Activated CD4-positive, alpha-beta T cell treated with anti-CD3 and anti-CD28 coated beads for 36 hours (primary cell): ENCODE measurements at regions of chr17 and their contacts with region 1.

Region 1: DNA sequence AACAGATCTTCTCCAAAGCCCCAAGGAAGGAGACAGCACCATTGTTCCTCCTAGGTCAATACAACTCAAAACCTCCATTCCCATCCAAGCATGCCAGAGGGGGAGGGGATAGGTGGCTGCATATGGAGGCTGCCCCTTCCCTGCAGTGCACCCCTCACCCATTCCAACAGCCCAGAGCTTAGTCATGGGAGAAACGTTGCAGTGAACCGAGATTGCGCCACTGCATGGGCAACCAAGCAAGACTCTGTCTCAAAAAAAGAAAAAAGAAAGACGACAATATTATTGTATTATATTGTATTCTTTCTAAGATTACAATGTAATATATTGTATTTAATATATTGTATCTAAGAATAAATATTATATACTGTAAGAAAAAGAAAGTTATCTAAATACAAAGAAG is 36.4 kb upstream of the CD300E start:
- DNase-seq: no peak
- ATAC-seq: no peak
- H3K4me3 Mint-ChIP-seq: no peak overlapping the region
- H3K27ac Mint-ChIP-seq: no peak overlapping the region
- H3K4me1 Mint-ChIP-seq: peaks cover 5% of the 10 kb centered on the region
- H3K27me3 Mint-ChIP-seq: peaks cover 16% of the 10 kb centered on the region

Region 2: GRCh38 chr17:74089869-74090464 is 569.9 kb before region 1 on chr17:
- CTCF ChIA-PET with region 1: no interaction called
- POLR2A ChIA-PET with region 1: no interaction called
- intact Hi-C with region 1: no loop called
- DNase-seq: peak; percentile 87
- ATAC-seq: peak; percentile 60
- H3K4me3 Mint-ChIP-seq: no peak overlapping the region
- H3K27ac Mint-ChIP-seq: no peak overlapping the region
- H3K4me1 Mint-ChIP-seq: no peaks in the 10 kb centered on the region
- H3K27me3 Mint-ChIP-seq: peaks cover 13% of the 10 kb centered on the region

Region 3: GRCh38 chr17:74478420-74479100 is 181.3 kb before region 1 on chr17:
- CTCF ChIA-PET with region 1: no interaction called
- POLR2A ChIA-PET with region 1: no interaction called
- intact Hi-C with region 1: no loop called
- DNase-seq: peak; percentile 64
- ATAC-seq: peak; percentile 90
- H3K4me3 Mint-ChIP-seq: peak overlapping the region; percentile 22
- H3K27ac Mint-ChIP-seq: peak overlapping the region; percentile 65
- H3K4me1 Mint-ChIP-seq: peaks cover 43% of the 10 kb centered on the region
- H3K27me3 Mint-ChIP-seq: no peaks in the 10 kb centered on the region

Region 4: DNA sequence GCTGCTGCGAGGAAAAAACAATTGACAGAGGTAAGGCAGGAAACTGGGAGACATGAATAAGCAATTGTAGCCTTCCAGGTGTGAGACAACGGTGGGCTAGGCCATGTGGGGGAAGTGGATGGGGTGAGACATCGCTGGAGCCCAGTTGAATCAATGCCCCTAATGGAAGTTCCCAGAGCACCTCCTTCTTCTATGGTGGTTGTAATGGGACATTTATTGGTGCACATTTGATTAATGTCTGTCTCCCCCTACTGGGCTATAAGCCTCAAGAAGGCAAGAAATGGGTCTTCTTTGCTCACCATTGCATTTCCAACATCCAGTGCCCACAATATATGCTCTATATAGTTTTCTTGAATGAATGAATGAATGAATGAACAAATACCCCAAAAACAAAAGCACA is 13.7 kb before region 1 on chr17:
- CTCF ChIA-PET with region 1: interaction called, 13 read pairs
- POLR2A ChIA-PET with region 1: no interaction called
- intact Hi-C with region 1: no loop called
- DNase-seq: no peak
- ATAC-seq: peak; percentile 36
- H3K4me3 Mint-ChIP-seq: no peak overlapping the region
- H3K27ac Mint-ChIP-seq: no peak overlapping the region
- H3K4me1 Mint-ChIP-seq: no peaks in the 10 kb centered on the region
- H3K27me3 Mint-ChIP-seq: peaks cover 20% of the 10 kb centered on the region

Region 5: GRCh38 chr17:74759243-74759801 is 99.4 kb after region 1 on chr17:
- CTCF ChIA-PET with region 1: interaction called, 15 read pairs
- POLR2A ChIA-PET with region 1: no interaction called
- intact Hi-C with region 1: no loop called
- DNase-seq: peak; percentile 71
- ATAC-seq: peak; percentile 78
- H3K4me3 Mint-ChIP-seq: peak overlapping the region; percentile 10
- H3K27ac Mint-ChIP-seq: peak overlapping the region; percentile 83
- H3K4me1 Mint-ChIP-seq: peaks cover 64% of the 10 kb centered on the region
- H3K27me3 Mint-ChIP-seq: no peaks in the 10 kb centered on the region

Region 6: GRCh38 chr17:74770498-74771318 is 110.8 kb after region 1 on chr17:
- CTCF ChIA-PET with region 1: interaction called, 34 read pairs
- POLR2A ChIA-PET with region 1: no interaction called
- intact Hi-C with region 1: loop called (anchors 1 kb)
- DNase-seq: peak; percentile 84
- ATAC-seq: peak; percentile 93
- H3K4me3 Mint-ChIP-seq: no peak overlapping the region
- H3K27ac Mint-ChIP-seq: peak overlapping the region; percentile 60
- H3K4me1 Mint-ChIP-seq: peaks cover 23% of the 10 kb centered on the region
- H3K27me3 Mint-ChIP-seq: no peaks in the 10 kb centered on the region

Region 7: GRCh38 chr17:74864866-74865395 is 205.0 kb after region 1 on chr17:
- CTCF ChIA-PET with region 1: interaction called, 13 read pairs
- POLR2A ChIA-PET with region 1: no interaction called
- intact Hi-C with region 1: loop called (anchors 1 to 2 kb)
- DNase-seq: peak; percentile 83
- ATAC-seq: peak; percentile 65
- H3K4me3 Mint-ChIP-seq: no peak overlapping the region
- H3K27ac Mint-ChIP-seq: peak overlapping the region; percentile 39
- H3K4me1 Mint-ChIP-seq: peaks cover 11% of the 10 kb centered on the region
- H3K27me3 Mint-ChIP-seq: peaks cover 12% of the 10 kb centered on the region